Endothelial cell of umbilical vein (primary cell): ENCODE measurements at regions of chr2 and their contacts with region 1.

Region 1: GRCh38 chr2:46866770-46867246 is 48.8 kb downstream of the MCFD2 start:
- DNase-seq: peak; percentile 80
- H3K4me3 ChIP-seq: no peak overlapping the region
- H3K27ac ChIP-seq: peak overlapping the region; percentile 86
- H3K4me1 ChIP-seq: peaks cover 13% of the 10 kb centered on the region
- H3K27me3 ChIP-seq: no peaks in the 10 kb centered on the region
- CTCF ChIP-seq: no peak
- POLR2A ChIP-seq: no peak

Region 2: DNA sequence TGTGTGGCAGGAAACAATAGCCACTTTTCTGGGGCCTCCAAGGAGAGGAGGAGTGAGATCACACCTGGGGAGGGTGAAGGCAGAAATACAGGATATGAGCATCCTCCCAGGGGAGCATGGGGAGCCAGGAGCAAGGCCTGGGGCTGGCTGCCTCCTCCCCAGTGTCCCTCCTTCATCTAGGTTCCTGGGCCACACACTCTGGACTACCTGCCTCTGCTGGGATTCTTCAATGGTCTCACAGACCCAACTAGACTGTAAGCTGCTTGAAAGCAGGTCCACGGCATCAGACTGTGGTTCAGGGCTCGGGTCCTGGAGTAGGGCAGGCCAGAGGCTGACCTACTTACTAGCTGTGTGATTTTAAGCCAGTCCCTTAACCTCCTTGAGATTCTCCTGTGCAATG is 45.2 kb before region 1 on chr2:
- CTCF ChIA-PET with region 1: no interaction called
- POLR2A ChIA-PET with region 1: no interaction called
- dilution Hi-C with region 1: no loop called
- intact Hi-C with region 1: no loop called
- DNase-seq: no peak
- H3K4me3 ChIP-seq: no peak overlapping the region
- H3K27ac ChIP-seq: no peak overlapping the region
- H3K4me1 ChIP-seq: no peaks in the 10 kb centered on the region
- H3K27me3 ChIP-seq: no peaks in the 10 kb centered on the region
- CTCF ChIP-seq: no peak
- POLR2A ChIP-seq: no peak

Region 3: GRCh38 chr2:46836295-46837111 is 30.3 kb before region 1 on chr2:
- CTCF ChIA-PET with region 1: no interaction called
- POLR2A ChIA-PET with region 1: no interaction called
- dilution Hi-C with region 1: no loop called
- intact Hi-C with region 1: no loop called
- DNase-seq: no peak
- H3K4me3 ChIP-seq: no peak overlapping the region
- H3K27ac ChIP-seq: no peak overlapping the region
- H3K4me1 ChIP-seq: no peaks in the 10 kb centered on the region
- H3K27me3 ChIP-seq: no peaks in the 10 kb centered on the region
- CTCF ChIP-seq: no peak
- POLR2A ChIP-seq: no peak

Region 4: GRCh38 chr2:46847235-46848068 is 19.4 kb before region 1 on chr2:
- CTCF ChIA-PET with region 1: interaction called, 6 read pairs
- POLR2A ChIA-PET with region 1: no interaction called
- dilution Hi-C with region 1: no loop called
- intact Hi-C with region 1: loop called (anchors 2 kb)
- DNase-seq: peak; percentile 96
- H3K4me3 ChIP-seq: no peak overlapping the region
- H3K27ac ChIP-seq: peak overlapping the region; percentile 16
- H3K4me1 ChIP-seq: peaks cover 46% of the 10 kb centered on the region
- H3K27me3 ChIP-seq: no peaks in the 10 kb centered on the region
- CTCF ChIP-seq: no peak
- POLR2A ChIP-seq: no peak

Region 5: DNA sequence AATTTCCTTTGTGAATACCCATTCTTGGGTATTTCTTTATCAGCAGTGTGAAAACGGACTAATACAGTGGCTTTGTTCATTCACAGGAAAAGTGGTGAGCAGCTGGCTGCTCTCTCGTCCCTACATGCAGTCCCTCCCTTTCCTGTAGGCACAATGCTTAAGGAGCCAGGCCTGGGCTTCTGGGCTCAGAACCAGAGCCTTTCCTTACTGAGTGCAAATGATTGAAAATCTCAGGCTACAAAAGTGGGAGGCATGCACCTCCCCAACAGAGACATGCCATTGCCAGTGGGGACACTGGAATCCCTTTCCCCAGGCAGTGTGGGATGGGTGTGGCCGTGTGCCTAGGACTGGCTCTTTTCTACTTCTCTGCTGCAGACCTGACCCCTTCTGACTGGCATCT is 12.5 kb before region 1 on chr2:
- CTCF ChIA-PET with region 1: interaction called, 5 read pairs
- POLR2A ChIA-PET with region 1: no interaction called
- dilution Hi-C with region 1: no loop called
- intact Hi-C with region 1: loop called (anchors 1 kb)
- DNase-seq: peak; percentile 72
- H3K4me3 ChIP-seq: no peak overlapping the region
- H3K27ac ChIP-seq: peak overlapping the region; percentile 75
- H3K4me1 ChIP-seq: peaks cover 50% of the 10 kb centered on the region
- H3K27me3 ChIP-seq: no peaks in the 10 kb centered on the region
- CTCF ChIP-seq: no peak
- POLR2A ChIP-seq: no peak